ENCODE measurements at regions of chr2 and their contacts with region 1.

Region 1: GRCh38 chr2:70647873-70648481 is 94.4 kb upstream of the TGFA start:
- DNase-seq: peak; percentile 72 to 75
- H3K4me3 ChIP-seq: no peak overlapping the region
- H3K27ac ChIP-seq: no peak overlapping the region
- H3K4me1 ChIP-seq: no peaks in the 10 kb centered on the region
- H3K27me3 ChIP-seq: no peaks in the 10 kb centered on the region
- CTCF ChIP-seq: peak; percentile 87 to 98 (median 96)
- POLR2A ChIP-seq: no peak

Region 2: GRCh38 chr2:70301344-70302194 is 346.4 kb before region 1 on chr2 and contains the start of gene FAM136A:
- intact Hi-C with region 1: loop called (anchors 10 kb)
- DNase-seq: peak; percentile 83 to 88
- H3K4me3 ChIP-seq: peak within 1 kb of the TSS; percentile 60 to 96 (median 72)
- H3K27ac ChIP-seq: peak within 1 kb of the TSS; percentile 68 to 82 (median 81)
- H3K4me1 ChIP-seq: peaks cover 0 to 12% of the 10 kb centered on the region in 2 donors
- H3K27me3 ChIP-seq: no peaks in the 10 kb centered on the region
- CTCF ChIP-seq: peak; percentile 57 to 99 (median 97)
- POLR2A ChIP-seq: peak in 1 of 2 donors; percentile 65
- total RNA-seq, gene FAM136A: 20.5 to 47.3 (median 39.4) TPM

Region 3: GRCh38 chr2:70340921-70341765 is 306.8 kb before region 1 on chr2:
- intact Hi-C with region 1: loop called (anchors 10 kb)
- DNase-seq: peak; percentile 26 to 38
- H3K4me3 ChIP-seq: no peak overlapping the region
- H3K27ac ChIP-seq: no peak overlapping the region
- H3K4me1 ChIP-seq: no peaks in the 10 kb centered on the region
- H3K27me3 ChIP-seq: no peaks in the 10 kb centered on the region
- CTCF ChIP-seq: peak; percentile 63 to 96 (median 79)
- POLR2A ChIP-seq: no peak